T-cell (primary cell): ENCODE measurements at regions of chr14 and their contacts with region 1.

Region 1: GRCh38 chr14:100108042-100108825 is 43.0 kb downstream of the EVL start:
- DNase-seq: peak; percentile 67 to 92 (median 85)
- ATAC-seq: peak; percentile 64 to 68 (median 66)
- H3K4me3 ChIP-seq: no peak overlapping the region
- H3K4me3 Mint-ChIP-seq: peak overlapping the region in 1 of 3 donors; percentile 81
- H3K27ac ChIP-seq: peak overlapping the region; percentile 81
- H3K27ac Mint-ChIP-seq: peak overlapping the region; percentile 94 to 96
- H3K4me1 ChIP-seq: peaks cover 45 to 85% of the 10 kb centered on the region in 2 experiments
- H3K4me1 Mint-ChIP-seq: peaks cover 81 to 85% (median 81%) of the 10 kb centered on the region in 3 donors
- H3K27me3 ChIP-seq: no peaks in the 10 kb centered on the region
- H3K27me3 Mint-ChIP-seq: no peaks in the 10 kb centered on the region

Region 2: GRCh38 chr14:99982537-99983250 is 125.5 kb before region 1 on chr14:
- CTCF ChIA-PET with region 1: interaction called, 8 to 20 read pairs
- POLR2A ChIA-PET with region 1: no interaction called
- DNase-seq: peak; percentile 29 to 86 (median 52)
- ATAC-seq: peak; percentile 94 to 95 (median 94)
- H3K4me3 ChIP-seq: no peak overlapping the region
- H3K4me3 Mint-ChIP-seq: no peak overlapping the region
- H3K27ac ChIP-seq: no peak overlapping the region
- H3K27ac Mint-ChIP-seq: no peak overlapping the region
- H3K4me1 ChIP-seq: peaks cover 0 to 16% of the 10 kb centered on the region in 2 experiments
- H3K4me1 Mint-ChIP-seq: peaks cover 8 to 14% (median 13%) of the 10 kb centered on the region in 3 donors
- H3K27me3 ChIP-seq: no peaks in the 10 kb centered on the region
- H3K27me3 Mint-ChIP-seq: no peaks in the 10 kb centered on the region

Region 3: GRCh38 chr14:100056964-100057795 is 51.1 kb before region 1 on chr14:
- CTCF ChIA-PET with region 1: interaction called, 5 to 30 read pairs
- POLR2A ChIA-PET with region 1: interaction called in 1 of 2 experiments, 10 read pairs
- DNase-seq: peak in 6 of 35 experiments; percentile 28 to 80 (median 42)
- ATAC-seq: peak; percentile 75 to 83 (median 80)
- H3K4me3 ChIP-seq: no peak overlapping the region
- H3K4me3 Mint-ChIP-seq: peak overlapping the region in 2 of 3 donors; percentile 41 to 49
- H3K27ac ChIP-seq: no peak overlapping the region
- H3K27ac Mint-ChIP-seq: peak overlapping the region; percentile 90 to 93
- H3K4me1 ChIP-seq: peaks cover 37 to 52% of the 10 kb centered on the region in 2 experiments
- H3K4me1 Mint-ChIP-seq: peaks cover 54 to 67% (median 56%) of the 10 kb centered on the region in 3 donors
- H3K27me3 ChIP-seq: no peaks in the 10 kb centered on the region
- H3K27me3 Mint-ChIP-seq: no peaks in the 10 kb centered on the region

Region 4: GRCh38 chr14:100062590-100062989 is 45.6 kb before region 1 on chr14:
- CTCF ChIA-PET with region 1: interaction called, 5 to 30 read pairs
- POLR2A ChIA-PET with region 1: interaction called in 1 of 2 experiments, 10 read pairs
- DNase-seq: peak in 1 of 35 experiments; percentile 50
- ATAC-seq: no peak
- H3K4me3 ChIP-seq: peak overlapping the region in 1 of 2 donors; percentile 34
- H3K4me3 Mint-ChIP-seq: peak overlapping the region; percentile 80 to 96 (median 87)
- H3K27ac ChIP-seq: peak overlapping the region; percentile 90
- H3K27ac Mint-ChIP-seq: peak overlapping the region; percentile 98 to 100
- H3K4me1 ChIP-seq: peaks cover 57 to 65% of the 10 kb centered on the region in 2 experiments
- H3K4me1 Mint-ChIP-seq: peaks cover 73 to 77% (median 76%) of the 10 kb centered on the region in 3 donors
- H3K27me3 ChIP-seq: no peaks in the 10 kb centered on the region
- H3K27me3 Mint-ChIP-seq: no peaks in the 10 kb centered on the region